Activated CD4-positive, alpha-beta memory T cell treated with anti-CD3 and anti-CD28 coated beads for 36 hours (primary cell): ENCODE measurements at regions of chr2 and their contacts with region 1.

Region 1: GRCh38 chr2:131105156-131105949 is at the start of gene PLEKHB2:
- DNase-seq: peak; percentile 95
- H3K4me3 Mint-ChIP-seq: peak within 1 kb of the TSS; percentile 85
- H3K27ac Mint-ChIP-seq: peak within 1 kb of the TSS; percentile 89
- H3K4me1 Mint-ChIP-seq: peaks cover 42% of the 10 kb centered on the region
- H3K27me3 Mint-ChIP-seq: no peaks in the 10 kb centered on the region
- total RNA-seq, gene PLEKHB2: 50.0 to 52.2 TPM

Region 2: GRCh38 chr2:130152816-130153595 is 952.3 kb before region 1 on chr2:
- CTCF ChIA-PET with region 1: no interaction called
- POLR2A ChIA-PET with region 1: no interaction called
- intact Hi-C with region 1: no loop called
- DNase-seq: no peak
- H3K4me3 Mint-ChIP-seq: no peak overlapping the region
- H3K27ac Mint-ChIP-seq: no peak overlapping the region
- H3K4me1 Mint-ChIP-seq: no peaks in the 10 kb centered on the region
- H3K27me3 Mint-ChIP-seq: no peaks in the 10 kb centered on the region

Region 3: DNA sequence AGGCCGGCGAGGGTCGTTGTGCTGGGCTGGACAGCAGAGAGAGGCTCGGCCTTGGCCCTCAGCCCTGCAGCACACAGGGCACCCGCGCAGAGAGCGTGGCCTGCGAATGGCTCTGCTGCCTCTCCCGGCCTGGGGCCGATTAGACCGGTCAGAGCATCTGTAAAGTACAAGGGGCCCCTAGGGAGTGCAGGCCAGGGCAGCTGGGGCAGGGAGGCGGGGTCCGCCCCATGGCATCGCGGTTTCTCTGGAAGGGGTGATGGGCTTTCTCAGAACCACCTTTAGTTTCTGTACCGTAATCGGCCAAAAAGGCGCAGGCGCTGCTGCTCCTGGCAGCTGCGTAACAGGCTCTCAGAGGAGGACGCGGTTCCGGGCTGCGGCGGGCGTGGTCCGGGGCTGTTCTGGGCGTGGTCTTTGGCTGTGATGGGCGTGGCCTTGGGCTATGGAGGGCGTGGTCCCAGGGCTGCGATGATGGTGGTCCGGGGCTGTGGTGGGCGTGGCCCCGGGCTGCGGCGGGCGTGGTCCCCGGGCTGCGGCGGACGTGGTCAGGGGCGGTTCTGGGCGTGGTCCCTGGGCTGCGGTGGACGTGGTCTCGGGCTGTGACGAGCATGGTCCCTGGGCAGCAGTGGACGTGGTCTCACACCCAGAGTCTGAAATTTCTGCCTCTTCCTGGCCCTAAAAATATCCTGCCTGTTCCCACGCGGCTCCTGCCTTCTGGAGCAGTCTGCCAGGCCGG is 377.9 kb before region 1 on chr2:
- CTCF ChIA-PET with region 1: no interaction called
- POLR2A ChIA-PET with region 1: no interaction called
- intact Hi-C with region 1: loop called (anchors 2 kb)
- DNase-seq: peak; percentile 95
- H3K4me3 Mint-ChIP-seq: peak overlapping the region; percentile 70
- H3K27ac Mint-ChIP-seq: peak overlapping the region; percentile 55
- H3K4me1 Mint-ChIP-seq: peaks cover 9% of the 10 kb centered on the region
- H3K27me3 Mint-ChIP-seq: peaks cover 1% of the 10 kb centered on the region

Region 4: GRCh38 chr2:131093006-131093695 is 12.2 kb before region 1 on chr2 and contains the start of gene FAM168B:
- CTCF ChIA-PET with region 1: interaction called, 14 read pairs
- POLR2A ChIA-PET with region 1: interaction called, 10 read pairs
- intact Hi-C with region 1: loop called (anchors 1 kb)
- DNase-seq: peak; percentile 92
- H3K4me3 Mint-ChIP-seq: peak within 1 kb of the TSS; percentile 96
- H3K27ac Mint-ChIP-seq: peak within 1 kb of the TSS; percentile 96
- H3K4me1 Mint-ChIP-seq: peaks cover 15% of the 10 kb centered on the region
- H3K27me3 Mint-ChIP-seq: no peaks in the 10 kb centered on the region
- total RNA-seq, gene FAM168B: 50.5 to 57.1 TPM

Region 5: DNA sequence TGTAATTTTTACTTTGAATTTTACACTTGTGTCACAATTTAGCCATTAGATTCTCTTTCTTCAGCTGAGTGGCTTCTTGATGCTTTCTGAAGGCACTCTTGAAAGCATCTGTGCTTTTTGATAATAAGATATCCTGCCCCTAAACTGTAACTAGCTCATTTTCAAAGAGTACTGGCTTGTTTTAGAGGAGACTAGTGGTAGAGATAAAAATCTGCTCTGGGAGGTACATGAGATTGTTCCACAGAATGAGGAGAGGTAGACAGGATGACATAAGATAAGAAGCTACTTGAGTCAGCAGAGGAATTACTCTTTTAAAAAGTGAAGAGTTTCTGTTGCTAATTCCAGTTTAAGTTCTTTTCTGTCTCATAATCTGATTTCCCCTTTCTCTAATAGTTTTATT is 10.4 kb after region 1 on chr2:
- CTCF ChIA-PET with region 1: no interaction called
- POLR2A ChIA-PET with region 1: interaction called, 4 read pairs
- intact Hi-C with region 1: loop called (anchors 1 kb)
- DNase-seq: no peak
- H3K4me3 Mint-ChIP-seq: no peak overlapping the region
- H3K27ac Mint-ChIP-seq: no peak overlapping the region
- H3K4me1 Mint-ChIP-seq: peaks cover 54% of the 10 kb centered on the region
- H3K27me3 Mint-ChIP-seq: no peaks in the 10 kb centered on the region